ENCODE measurements at regions of chr19 and their contacts with region 1.

Region 1: GRCh38 chr19:39792999-39793546 is 14.4 kb downstream of the LEUTX start:
- DNase-seq: peak; percentile 78
- H3K4me3 Mint-ChIP-seq: peak overlapping the region; percentile 73
- H3K27ac Mint-ChIP-seq: no peak overlapping the region
- H3K4me1 Mint-ChIP-seq: peaks cover 14% of the 10 kb centered on the region
- H3K27me3 Mint-ChIP-seq: peaks cover 24% of the 10 kb centered on the region

Region 2: DNA sequence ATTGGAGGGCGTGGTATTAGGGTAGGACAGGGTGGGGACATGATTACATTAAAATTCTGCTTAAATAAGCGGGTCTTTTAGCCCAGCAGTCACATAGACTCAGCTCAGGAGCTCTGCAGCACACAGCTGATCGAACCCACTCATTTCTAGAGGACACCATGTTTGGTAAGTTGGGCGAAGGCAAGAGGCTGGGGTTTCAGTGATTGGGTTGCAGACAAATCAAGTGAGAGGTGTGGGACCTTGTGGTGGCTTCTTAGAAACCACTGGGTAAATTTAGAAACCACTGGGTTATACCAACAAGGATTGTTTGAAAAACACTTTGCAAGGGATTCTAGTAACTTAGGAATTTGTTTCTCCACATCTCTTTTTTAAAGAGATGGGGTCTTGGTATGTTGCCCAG is 14.3 kb before region 1 on chr19 and contains the start of gene LEUTX:
- CTCF ChIA-PET with region 1: interaction called, 10 read pairs
- POLR2A ChIA-PET with region 1: no interaction called
- DNase-seq: peak; percentile 53
- H3K4me3 Mint-ChIP-seq: peak within 1 kb of the TSS; percentile 11
- H3K27ac Mint-ChIP-seq: no peak within 1 kb of the TSS
- H3K4me1 Mint-ChIP-seq: peaks cover 35% of the 10 kb centered on the region
- H3K27me3 Mint-ChIP-seq: peaks cover 41% of the 10 kb centered on the region
- total RNA-seq, gene LEUTX: 0.35 TPM in 1 of 2 experiments, not detected in the other

Region 3: DNA sequence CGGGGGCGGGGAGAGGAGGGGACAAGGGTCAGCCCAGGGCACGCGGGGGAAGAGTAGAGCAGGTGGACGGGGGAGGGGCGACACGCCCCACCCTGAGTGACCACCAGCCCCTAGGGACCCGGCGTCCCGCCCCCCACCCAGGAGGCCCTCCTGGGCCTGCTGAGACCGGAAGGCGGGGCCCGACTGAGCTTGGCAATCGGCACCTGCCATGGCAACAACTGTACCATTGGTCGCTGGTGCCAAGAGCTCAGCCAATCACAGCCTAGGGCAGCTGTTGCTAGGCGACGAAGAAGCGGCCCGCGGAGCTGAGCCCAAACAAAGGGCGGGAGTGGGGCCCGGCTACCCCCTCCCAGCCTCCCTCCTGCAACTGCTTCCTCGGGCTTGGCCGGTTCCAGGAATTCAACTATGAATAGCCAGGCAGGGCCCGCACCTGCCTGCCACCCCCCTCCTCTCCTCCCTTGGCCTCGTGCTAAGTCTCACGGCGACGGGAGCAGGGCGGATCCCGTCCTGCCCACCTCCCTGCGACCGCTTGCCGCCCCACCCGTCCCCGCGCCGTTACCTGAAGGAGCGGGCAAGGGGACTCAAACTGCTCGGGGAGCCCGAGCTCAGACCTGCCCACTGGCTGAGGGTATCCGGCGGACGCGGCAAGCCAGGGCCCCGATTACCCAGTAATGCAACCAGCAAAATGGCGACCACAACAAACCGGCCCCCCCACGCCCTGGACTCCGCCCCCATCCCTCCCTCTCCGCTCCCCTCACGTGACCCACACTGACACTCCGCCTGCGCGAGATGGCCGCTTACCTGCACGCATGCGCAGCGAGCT is 40.6 kb after region 1 on chr19 and contains the start of gene DYRK1B:
- CTCF ChIA-PET with region 1: interaction called, 19 read pairs
- POLR2A ChIA-PET with region 1: no interaction called
- DNase-seq: peak; percentile 97
- H3K4me3 Mint-ChIP-seq: peak within 1 kb of the TSS; percentile 65
- H3K27ac Mint-ChIP-seq: peak within 1 kb of the TSS; percentile 78
- H3K4me1 Mint-ChIP-seq: peaks cover 30% of the 10 kb centered on the region
- H3K27me3 Mint-ChIP-seq: no peaks in the 10 kb centered on the region
- total RNA-seq, gene DYRK1B: 13.8 to 14.2 TPM